A549 (cell line): ENCODE measurements at regions of chr1 and their contacts with region 1.

Region 1: GRCh38 chr1:107762751-107763390 is 202.1 kb downstream of the VAV3 start:
- DNase-seq: no peak
- ATAC-seq: no peak
- H3K4me3 ChIP-seq: no peak overlapping the region
- H3K27ac ChIP-seq: no peak overlapping the region
- H3K4me1 ChIP-seq: no peaks in the 10 kb centered on the region
- CTCF ChIP-seq: no peak
- EP300 ChIP-seq: no peak
- POLR2A ChIP-seq: no peak
- RAD21 ChIP-seq: no peak

Region 2: DNA sequence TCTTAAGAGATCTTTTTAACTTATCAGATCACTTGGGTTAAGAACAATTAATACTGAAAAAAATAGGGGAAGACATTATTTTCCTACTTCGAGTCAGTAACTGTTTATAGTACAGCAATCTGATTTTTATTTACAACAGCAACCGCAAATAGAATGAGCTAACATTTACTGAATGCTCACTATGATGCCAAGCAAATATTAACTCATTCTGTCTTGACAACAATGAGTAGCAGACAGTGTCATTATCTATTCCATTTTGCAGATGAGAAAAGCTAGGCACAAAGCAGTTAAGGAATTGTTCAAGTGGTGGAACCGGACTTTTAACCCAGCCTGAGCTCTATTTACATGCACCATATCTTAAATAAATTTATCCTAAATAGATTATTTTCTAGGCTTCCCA is 348.3 kb before region 1 on chr1:
- CTCF ChIA-PET with region 1: no interaction called
- POLR2A ChIA-PET with region 1: no interaction called
- DNase-seq: no peak
- ATAC-seq: no peak
- H3K4me3 ChIP-seq: no peak overlapping the region
- H3K27ac ChIP-seq: no peak overlapping the region
- H3K4me1 ChIP-seq: no peaks in the 10 kb centered on the region
- CTCF ChIP-seq: no peak
- EP300 ChIP-seq: no peak
- POLR2A ChIP-seq: no peak
- RAD21 ChIP-seq: no peak

Region 3: GRCh38 chr1:107677697-107678096 is 85.2 kb before region 1 on chr1:
- CTCF ChIA-PET with region 1: no interaction called
- POLR2A ChIA-PET with region 1: no interaction called
- DNase-seq: no peak
- ATAC-seq: no peak
- H3K4me3 ChIP-seq: no peak overlapping the region
- H3K27ac ChIP-seq: peak overlapping the region; percentile 2 to 13; a peak in 1 of 6 replicates
- H3K4me1 ChIP-seq: peaks cover 58% of the 10 kb centered on the region
- CTCF ChIP-seq: no peak
- EP300 ChIP-seq: no peak
- POLR2A ChIP-seq: no peak
- RAD21 ChIP-seq: no peak

Region 4: DNA sequence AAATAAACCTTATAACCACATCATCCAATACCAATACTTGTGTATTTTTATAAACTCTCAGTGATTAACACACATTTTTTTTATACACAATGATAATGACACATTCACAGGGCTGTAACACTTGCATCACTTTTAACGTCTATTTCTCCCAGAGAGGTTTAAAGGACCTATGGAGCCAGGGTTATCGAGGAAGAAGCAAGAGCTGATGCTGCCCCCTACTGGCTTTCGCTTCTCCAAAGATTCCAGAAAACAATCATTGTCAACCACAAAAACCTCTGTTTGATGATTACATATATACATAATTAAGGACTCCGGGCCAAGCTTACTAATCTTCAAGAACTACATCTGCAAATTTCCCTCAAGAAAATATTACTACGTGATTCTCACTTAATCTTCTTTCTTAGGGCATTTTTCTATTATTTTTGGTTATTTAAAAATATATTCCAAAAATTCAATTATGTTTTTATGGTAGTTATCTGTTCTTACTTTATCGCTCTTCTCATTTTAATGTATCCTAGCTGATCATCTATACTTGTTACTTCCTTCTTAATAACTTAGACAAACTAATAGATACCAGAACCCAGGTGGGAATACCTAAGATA is 12.4 kb before region 1 on chr1:
- CTCF ChIA-PET with region 1: interaction called, 11 read pairs
- POLR2A ChIA-PET with region 1: no interaction called
- DNase-seq: peak; percentile 18 to 64
- ATAC-seq: peak; percentile 66 to 78; a peak in 5 of 6 replicates
- H3K4me3 ChIP-seq: no peak overlapping the region
- H3K27ac ChIP-seq: no peak overlapping the region
- H3K4me1 ChIP-seq: peaks cover 5% of the 10 kb centered on the region; the same call in 1 of the 3 replicates
- CTCF ChIP-seq: peak; percentile 81
- EP300 ChIP-seq: no peak
- POLR2A ChIP-seq: no peak
- RAD21 ChIP-seq: peak; percentile 84 to 86

Region 5: DNA sequence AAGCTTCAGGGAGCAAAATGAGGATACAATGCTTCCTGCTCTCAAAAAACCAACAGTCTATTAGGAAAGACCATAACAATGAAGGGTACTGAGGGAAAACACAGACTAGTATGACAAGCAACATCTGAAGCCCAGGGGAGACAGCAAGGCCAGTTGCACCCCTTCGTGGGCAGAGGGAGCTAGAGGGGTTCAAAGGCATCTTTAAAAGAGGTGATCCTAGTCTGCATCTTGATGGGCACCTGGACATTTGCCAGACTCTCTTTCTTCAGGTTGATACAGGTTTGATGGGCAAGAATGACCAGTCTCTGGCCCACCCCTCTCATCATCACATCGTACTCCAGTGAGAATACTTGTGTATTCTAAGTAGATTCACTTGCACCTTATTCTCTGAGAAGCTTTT is 24.4 kb after region 1 on chr1:
- CTCF ChIA-PET with region 1: no interaction called
- POLR2A ChIA-PET with region 1: no interaction called
- DNase-seq: peak in 1 of 2 experiments; percentile 0
- ATAC-seq: no peak
- H3K4me3 ChIP-seq: no peak overlapping the region
- H3K27ac ChIP-seq: no peak overlapping the region
- H3K4me1 ChIP-seq: no peaks in the 10 kb centered on the region
- CTCF ChIP-seq: no peak
- EP300 ChIP-seq: no peak
- POLR2A ChIP-seq: no peak
- RAD21 ChIP-seq: no peak

Region 6: GRCh38 chr1:107820805-107821204 is 57.9 kb after region 1 on chr1:
- CTCF ChIA-PET with region 1: no interaction called
- POLR2A ChIA-PET with region 1: no interaction called
- DNase-seq: no peak
- ATAC-seq: no peak
- H3K4me3 ChIP-seq: no peak overlapping the region
- H3K27ac ChIP-seq: no peak overlapping the region
- H3K4me1 ChIP-seq: no peaks in the 10 kb centered on the region
- CTCF ChIP-seq: no peak
- EP300 ChIP-seq: no peak
- POLR2A ChIP-seq: no peak
- RAD21 ChIP-seq: no peak